ENCODE measurements at regions of chr4 and their contacts with region 1.

Region 1: DNA sequence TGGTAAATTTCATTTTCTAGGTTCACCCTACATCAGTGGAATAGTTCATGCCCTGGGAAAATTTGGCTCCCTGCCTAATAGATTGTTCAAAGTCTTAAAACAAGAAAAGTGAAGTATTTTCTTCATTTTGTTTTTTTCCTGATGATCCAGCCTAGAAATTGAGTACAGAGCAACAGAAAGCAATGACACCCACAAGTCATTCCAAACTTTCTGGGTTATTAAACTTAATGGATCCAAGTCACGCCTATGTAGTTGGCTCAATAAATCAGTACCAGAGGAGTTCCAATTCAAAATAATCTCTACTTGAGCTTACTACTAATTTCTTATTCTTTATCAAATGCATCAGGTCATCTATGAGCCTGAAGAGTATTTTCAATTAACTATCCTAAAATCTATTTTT is 937.6 kb upstream of the SLIT2 start:
- DNase-seq: no peak
- H3K4me3 ChIP-seq: no peak overlapping the region
- H3K27ac ChIP-seq: no peak overlapping the region
- H3K4me1 ChIP-seq: peaks cover 0 to 5% (median 0%) of the 10 kb centered on the region in 4 donors
- H3K27me3 ChIP-seq: no peaks in the 10 kb centered on the region
- CTCF ChIP-seq: no peak
- EP300 ChIP-seq: no peak
- POLR2A ChIP-seq: no peak

Region 2: DNA sequence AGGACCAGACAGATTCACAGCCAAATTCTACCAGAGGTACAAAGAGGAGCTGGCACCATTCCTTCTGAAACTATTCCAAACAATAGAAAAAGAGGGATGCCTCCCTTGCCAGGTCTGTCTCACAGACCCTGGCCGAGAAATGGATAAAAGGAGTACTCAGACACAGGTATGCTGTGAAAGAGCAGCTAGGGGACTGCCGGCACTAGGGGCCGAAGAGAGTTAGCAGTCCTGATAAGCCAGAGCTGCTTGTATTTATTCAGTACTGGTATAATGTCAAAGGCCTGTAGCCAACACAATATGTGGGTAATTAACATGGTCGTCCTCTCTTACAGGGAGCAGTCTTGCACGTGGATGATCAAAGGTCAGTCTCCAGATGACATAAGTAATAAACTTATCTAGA is 250.5 kb before region 1 on chr4:
- intact Hi-C with region 1: no loop called
- DNase-seq: no peak
- H3K4me3 ChIP-seq: no peak overlapping the region
- H3K27ac ChIP-seq: no peak overlapping the region
- H3K4me1 ChIP-seq: no peaks in the 10 kb centered on the region
- H3K27me3 ChIP-seq: no peaks in the 10 kb centered on the region
- CTCF ChIP-seq: no peak
- EP300 ChIP-seq: no peak
- POLR2A ChIP-seq: no peak

Region 3: GRCh38 chr4:20159516-20159915 is 845.4 kb after region 1 on chr4:
- intact Hi-C with region 1: no loop called
- DNase-seq: no peak
- H3K4me3 ChIP-seq: no peak overlapping the region
- H3K27ac ChIP-seq: no peak overlapping the region
- H3K4me1 ChIP-seq: no peaks in the 10 kb centered on the region
- H3K27me3 ChIP-seq: no peaks in the 10 kb centered on the region
- CTCF ChIP-seq: no peak
- EP300 ChIP-seq: no peak
- POLR2A ChIP-seq: no peak

Region 4: GRCh38 chr4:20237894-20238537 is 923.9 kb after region 1 on chr4:
- intact Hi-C with region 1: loop called (anchors 5 kb)
- DNase-seq: no peak
- H3K4me3 ChIP-seq: no peak overlapping the region
- H3K27ac ChIP-seq: no peak overlapping the region
- H3K4me1 ChIP-seq: no peaks in the 10 kb centered on the region
- H3K27me3 ChIP-seq: no peaks in the 10 kb centered on the region
- CTCF ChIP-seq: no peak
- EP300 ChIP-seq: no peak
- POLR2A ChIP-seq: no peak